HepG2 (cell line): ENCODE measurements at regions of chr2 and their contacts with region 1.

Region 1: GRCh38 chr2:3738454-3738853 is 35.1 kb downstream of the DCDC2C start:
- DNase-seq: peak; percentile 74
- ATAC-seq: peak; percentile 95
- H3K4me3 ChIP-seq: no peak overlapping the region
- H3K27ac ChIP-seq: no peak overlapping the region
- H3K4me1 ChIP-seq: no peaks in the 10 kb centered on the region
- H3K27me3 ChIP-seq: peaks cover 1 to 37% of the 10 kb centered on the region in 2 experiments; a peak in 4 of 5 replicates
- CTCF ChIP-seq: peak; percentile 43
- EP300 ChIP-seq: no peak
- POLR2A ChIP-seq: no peak
- RAD21 ChIP-seq: no peak

Region 2: DNA sequence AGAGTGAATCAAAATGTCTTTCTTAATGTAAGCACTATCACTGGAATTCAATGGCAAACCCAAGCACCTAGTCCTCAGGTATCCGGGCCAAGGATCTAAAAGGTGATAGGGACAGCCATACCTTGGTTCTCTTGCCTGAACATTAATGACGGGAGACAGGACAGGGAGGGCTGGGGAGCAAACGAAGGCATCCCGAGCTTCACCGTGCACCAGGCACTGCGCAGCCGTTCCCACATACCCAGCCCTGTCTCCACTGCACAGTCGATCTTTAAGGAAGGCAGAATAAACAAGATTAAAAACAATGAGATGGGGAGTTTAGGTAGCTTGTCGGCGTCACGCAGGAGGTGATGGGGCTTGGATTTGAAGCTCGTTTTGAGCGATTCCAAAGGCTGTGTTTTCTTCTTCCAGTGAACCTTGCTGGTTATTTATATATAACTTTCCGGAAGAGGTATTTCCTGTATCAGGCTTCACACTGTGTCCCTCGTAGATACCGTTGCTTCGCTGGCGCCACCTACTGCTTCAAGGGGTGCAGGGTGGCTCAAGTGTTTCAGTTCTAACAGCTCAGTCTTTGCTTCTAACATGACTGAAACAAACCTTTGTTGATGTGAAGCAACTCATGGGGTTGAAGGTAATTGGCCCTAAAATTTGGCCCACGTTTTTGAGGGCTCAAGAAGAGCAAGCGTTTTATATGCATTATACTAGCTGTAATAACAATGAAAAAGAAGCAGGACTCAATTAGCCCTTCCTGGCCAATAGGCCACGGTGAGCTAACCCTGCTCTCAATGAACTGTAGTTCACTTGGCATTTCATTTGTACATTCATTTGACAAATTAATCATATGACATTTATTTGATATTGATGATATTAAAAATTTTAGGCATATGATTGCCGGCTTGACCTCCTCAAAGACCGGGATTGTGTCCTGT is 42.3 kb after region 1 on chr2:
- CTCF ChIA-PET with region 1: interaction called, 6 read pairs
- POLR2A ChIA-PET with region 1: interaction called, 4 read pairs
- in situ Hi-C with region 1: no loop called
- intact Hi-C with region 1: loop called (anchors 1 kb)
- DNase-seq: peak; percentile 75
- ATAC-seq: peak; percentile 98
- H3K4me3 ChIP-seq: peak overlapping the region; percentile 1 to 45 (median 16); a peak in 2 of 6 replicates
- H3K27ac ChIP-seq: no peak overlapping the region
- H3K4me1 ChIP-seq: no peaks in the 10 kb centered on the region
- H3K27me3 ChIP-seq: peaks cover 5 to 69% of the 10 kb centered on the region in 2 experiments
- CTCF ChIP-seq: peak; percentile 87
- EP300 ChIP-seq: no peak
- POLR2A ChIP-seq: no peak
- RAD21 ChIP-seq: peak; percentile 53; the same call in 1 of the 2 replicates

Region 3: GRCh38 chr2:3805201-3805939 is 66.9 kb after region 1 on chr2:
- CTCF ChIA-PET with region 1: interaction called, 6 read pairs
- POLR2A ChIA-PET with region 1: no interaction called
- in situ Hi-C with region 1: no loop called
- intact Hi-C with region 1: loop called (anchors 1 kb)
- DNase-seq: peak; percentile 57
- ATAC-seq: peak; percentile 97
- H3K4me3 ChIP-seq: no peak overlapping the region
- H3K27ac ChIP-seq: no peak overlapping the region
- H3K4me1 ChIP-seq: no peaks in the 10 kb centered on the region
- H3K27me3 ChIP-seq: peaks cover 2 to 7% of the 10 kb centered on the region in 2 experiments; a peak in 1 of 5 replicates
- CTCF ChIP-seq: peak; percentile 78
- EP300 ChIP-seq: no peak
- POLR2A ChIP-seq: no peak
- RAD21 ChIP-seq: peak; percentile 59; the same call in 1 of the 2 replicates

Region 4: GRCh38 chr2:3913166-3913565 is 174.7 kb after region 1 on chr2:
- CTCF ChIA-PET with region 1: no interaction called
- POLR2A ChIA-PET with region 1: no interaction called
- in situ Hi-C with region 1: no loop called
- intact Hi-C with region 1: no loop called
- DNase-seq: no peak
- ATAC-seq: no peak
- H3K4me3 ChIP-seq: no peak overlapping the region
- H3K27ac ChIP-seq: no peak overlapping the region
- H3K4me1 ChIP-seq: no peaks in the 10 kb centered on the region
- H3K27me3 ChIP-seq: peaks cover 0 to 30% of the 10 kb centered on the region in 2 experiments; a peak in 3 of 5 replicates
- CTCF ChIP-seq: no peak
- EP300 ChIP-seq: no peak
- POLR2A ChIP-seq: no peak
- RAD21 ChIP-seq: no peak